BJ (cell line): ENCODE measurements at regions of chr2 and their contacts with region 1.

Region 1: DNA sequence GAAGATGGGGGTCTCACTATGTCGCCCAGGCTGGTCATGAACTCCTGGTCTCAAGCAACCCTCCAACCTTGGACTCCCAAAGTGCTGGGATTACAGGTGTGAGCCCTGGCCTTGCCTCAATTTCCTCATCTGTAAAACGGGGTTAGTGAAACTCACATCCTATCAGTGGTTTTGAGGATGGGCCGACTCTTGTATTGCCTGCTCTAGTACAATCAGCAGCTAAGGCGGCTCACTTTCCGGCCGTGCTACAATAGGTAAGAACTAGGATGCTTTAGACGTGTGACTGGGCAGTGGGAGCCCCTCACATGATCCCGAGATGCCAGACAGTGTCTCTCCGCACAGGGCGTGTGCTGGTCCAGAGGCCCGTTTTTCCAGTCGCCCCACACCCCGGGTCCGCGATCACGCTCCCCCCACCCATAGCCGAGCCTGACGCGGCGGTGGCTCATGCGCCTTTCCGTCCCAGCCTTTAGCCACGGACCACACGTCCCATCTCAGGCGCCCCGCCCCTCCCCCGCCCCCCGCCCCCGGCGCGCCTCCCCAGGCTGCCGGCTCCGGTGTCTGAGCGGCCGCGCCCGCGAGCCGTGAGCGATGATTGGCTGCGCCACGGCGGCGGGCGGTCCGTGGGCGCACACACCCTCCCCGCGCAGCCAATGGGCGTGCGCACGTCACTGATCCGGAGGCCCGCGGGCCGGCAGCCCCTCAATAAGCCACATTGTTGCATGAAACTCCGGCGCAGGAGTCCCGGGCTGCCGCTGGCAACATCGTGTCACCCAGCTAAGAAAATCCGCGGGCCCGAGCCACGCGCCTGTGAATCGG is at the start of gene HK2:
- DNase-seq: no peak
- H3K4me3 ChIP-seq: peak within 1 kb of the TSS; percentile 95
- H3K27me3 ChIP-seq: no peaks in the 10 kb centered on the region
- CTCF ChIP-seq: no peak
- polyA plus RNA-seq, gene HK2: 21.8 and 23.8 TPM in 2 replicates

Region 2: GRCh38 chr2:74778381-74779264 is 55.0 kb before region 1 on chr2:
- CTCF ChIA-PET with region 1: no interaction called
- POLR2A ChIA-PET with region 1: no interaction called
- DNase-seq: no peak
- H3K4me3 ChIP-seq: no peak overlapping the region
- H3K27me3 ChIP-seq: peaks cover 3% of the 10 kb centered on the region
- CTCF ChIP-seq: no peak

Region 3: DNA sequence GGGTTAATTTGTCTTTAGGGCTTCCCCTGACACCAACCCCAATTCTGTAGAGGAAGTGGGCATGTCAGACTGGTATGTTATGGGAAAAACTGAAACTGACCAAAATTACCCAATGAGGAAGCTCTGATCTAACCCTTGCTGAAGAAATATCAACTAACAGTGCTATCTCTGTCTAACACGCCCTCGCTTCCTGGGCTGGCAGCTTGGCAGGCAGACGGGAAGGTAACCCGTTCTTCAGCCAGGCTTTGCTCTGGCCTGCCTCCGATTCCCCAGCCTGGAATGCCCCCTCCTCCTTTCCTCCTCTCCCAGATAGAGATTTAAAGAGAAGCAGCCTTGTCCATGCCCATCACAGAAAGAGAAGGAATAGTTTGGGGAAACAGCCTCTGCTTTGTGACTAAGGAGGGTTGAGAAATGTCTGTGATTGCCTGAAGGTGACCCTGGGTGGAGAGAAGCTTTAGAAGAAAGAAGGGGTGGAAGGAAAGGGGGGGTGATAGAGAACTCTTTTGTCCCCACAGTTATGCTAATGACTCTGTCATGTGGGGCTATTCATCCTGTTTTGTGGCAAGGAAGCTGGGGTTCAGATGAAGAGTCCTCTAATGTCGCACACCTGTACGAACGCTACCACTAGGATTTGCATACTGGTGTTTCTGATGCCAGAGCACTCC is 15.7 kb after region 1 on chr2:
- CTCF ChIA-PET with region 1: interaction called, 10 read pairs
- POLR2A ChIA-PET with region 1: no interaction called
- DNase-seq: no peak
- H3K4me3 ChIP-seq: no peak overlapping the region
- H3K27me3 ChIP-seq: no peaks in the 10 kb centered on the region
- CTCF ChIP-seq: no peak